ENCODE measurements at regions of chr14 and their contacts with region 1.

Region 1: GRCh38 chr14:49767562-49768300 is at the start of gene KLHDC2:
- DNase-seq: peak; percentile 93
- ATAC-seq: peak; percentile 86
- H3K4me3 ChIP-seq: peak within 1 kb of the TSS; percentile 74 to 97 (median 76)
- H3K4me3 Mint-ChIP-seq: peak within 1 kb of the TSS; percentile 98
- H3K27ac ChIP-seq: peak within 1 kb of the TSS; percentile 91 to 97
- H3K27ac Mint-ChIP-seq: peak within 1 kb of the TSS; percentile 99
- H3K4me1 ChIP-seq: peaks cover 22 to 29% of the 10 kb centered on the region in 2 donors
- H3K4me1 Mint-ChIP-seq: peaks cover 31% of the 10 kb centered on the region
- H3K27me3 ChIP-seq: no peaks in the 10 kb centered on the region
- H3K27me3 Mint-ChIP-seq: no peaks in the 10 kb centered on the region
- CTCF ChIP-seq: peak; percentile 40
- total RNA-seq, gene KLHDC2: 60.5 and 65.3 TPM in 2 replicates

Region 2: DNA sequence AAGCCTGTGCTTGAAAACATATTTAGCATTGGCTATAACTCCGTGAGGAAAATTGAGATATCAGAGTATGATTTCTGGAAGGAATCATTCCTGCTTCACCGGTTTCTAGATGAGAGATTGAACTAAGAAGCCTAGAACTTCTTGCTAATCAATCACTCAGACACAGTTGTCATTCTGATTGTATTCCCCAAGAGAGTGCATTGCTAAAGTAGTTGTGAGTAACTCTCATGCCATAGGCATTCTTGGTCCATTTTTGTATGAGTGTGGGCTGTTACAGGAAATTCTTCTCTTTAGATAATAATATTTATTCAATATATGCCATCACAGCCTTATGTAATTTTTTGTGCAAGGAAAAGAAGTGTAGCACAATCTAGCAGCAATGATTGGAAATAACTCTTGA is 1199.0 kb before region 1 on chr14:
- CTCF ChIA-PET with region 1: no interaction called
- POLR2A ChIA-PET with region 1: no interaction called
- intact Hi-C with region 1: no loop called
- DNase-seq: no peak
- ATAC-seq: no peak
- H3K4me3 ChIP-seq: no peak overlapping the region
- H3K4me3 Mint-ChIP-seq: no peak overlapping the region
- H3K27ac ChIP-seq: no peak overlapping the region
- H3K27ac Mint-ChIP-seq: no peak overlapping the region
- H3K4me1 ChIP-seq: no peaks in the 10 kb centered on the region
- H3K4me1 Mint-ChIP-seq: no peaks in the 10 kb centered on the region
- H3K27me3 ChIP-seq: no peaks in the 10 kb centered on the region
- H3K27me3 Mint-ChIP-seq: no peaks in the 10 kb centered on the region
- CTCF ChIP-seq: no peak

Region 3: DNA sequence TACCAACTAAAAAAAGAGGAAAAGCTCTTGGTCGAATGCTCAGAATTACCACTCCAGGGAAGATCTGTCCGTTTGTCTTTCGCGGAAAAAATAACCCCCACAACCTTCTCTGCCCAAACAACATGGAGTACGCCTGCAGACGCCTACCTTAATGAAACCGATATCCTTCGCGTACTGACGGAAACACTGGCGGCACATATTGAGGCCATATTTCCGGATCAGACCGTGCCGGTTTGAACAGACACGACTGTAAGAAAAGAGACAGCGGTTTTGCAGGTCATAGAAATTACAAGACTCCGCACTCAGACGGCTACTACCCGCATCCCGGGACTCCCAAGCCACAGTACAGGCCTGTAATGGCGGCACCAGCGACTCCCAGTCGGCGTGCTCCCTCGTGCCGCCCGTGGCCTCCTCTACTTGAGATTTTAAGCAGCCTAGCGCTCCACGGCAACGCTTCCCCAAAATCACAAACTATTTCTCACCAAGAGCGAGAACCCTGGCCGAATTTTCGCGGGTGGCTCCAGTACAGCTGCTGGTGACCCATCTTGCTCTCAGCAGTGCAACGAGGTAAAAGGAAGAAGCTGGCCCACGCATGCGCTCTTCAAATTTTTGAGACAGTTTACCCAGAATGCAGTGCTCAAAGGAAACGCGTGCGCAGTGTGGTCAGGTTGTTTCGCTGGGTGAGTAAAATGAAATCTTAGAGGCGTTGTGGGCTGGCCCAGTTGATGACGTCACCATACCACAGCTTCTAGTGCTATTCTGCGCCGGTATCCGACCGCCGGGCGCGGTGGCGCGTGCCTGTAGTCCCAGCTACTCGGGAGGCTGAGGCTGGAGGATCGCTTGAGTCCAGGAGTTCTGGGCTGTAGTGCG is 181.7 kb before region 1 on chr14 and contains the start of gene RPS29:
- CTCF ChIA-PET with region 1: interaction called, 3 read pairs
- POLR2A ChIA-PET with region 1: interaction called, 6 read pairs
- intact Hi-C with region 1: loop called (anchors 2 kb)
- DNase-seq: peak; percentile 100
- ATAC-seq: peak; percentile 86
- H3K4me3 ChIP-seq: peak within 1 kb of the TSS; percentile 70 to 100 (median 88)
- H3K4me3 Mint-ChIP-seq: peak within 1 kb of the TSS; percentile 88
- H3K27ac ChIP-seq: peak within 1 kb of the TSS; percentile 88 to 95
- H3K27ac Mint-ChIP-seq: peak within 1 kb of the TSS; percentile 100
- H3K4me1 ChIP-seq: peaks cover 17 to 24% of the 10 kb centered on the region in 2 donors
- H3K4me1 Mint-ChIP-seq: peaks cover 46% of the 10 kb centered on the region
- H3K27me3 ChIP-seq: no peaks in the 10 kb centered on the region
- H3K27me3 Mint-ChIP-seq: no peaks in the 10 kb centered on the region
- CTCF ChIP-seq: no peak
- total RNA-seq, gene RPS29: 2,497 and 2,873 TPM in 2 replicates

Region 4: GRCh38 chr14:49620182-49621113 is 147.3 kb before region 1 on chr14 and contains the starts of genes MGAT2 and RPL36AL:
- CTCF ChIA-PET with region 1: interaction called, 18 read pairs
- POLR2A ChIA-PET with region 1: interaction called, 14 read pairs
- intact Hi-C with region 1: loop called (anchors 1 kb)
- DNase-seq: peak; percentile 98
- ATAC-seq: peak; percentile 93
- H3K4me3 ChIP-seq: peak within 1 kb of the TSS; percentile 90 to 99 (median 97)
- H3K4me3 Mint-ChIP-seq: peak within 1 kb of the TSS; percentile 99
- H3K27ac ChIP-seq: peak within 1 kb of the TSS; percentile 96 to 98
- H3K27ac Mint-ChIP-seq: peak within 1 kb of the TSS; percentile 99
- H3K4me1 ChIP-seq: peaks cover 31 to 44% of the 10 kb centered on the region in 2 donors
- H3K4me1 Mint-ChIP-seq: peaks cover 55% of the 10 kb centered on the region
- H3K27me3 ChIP-seq: no peaks in the 10 kb centered on the region
- H3K27me3 Mint-ChIP-seq: no peaks in the 10 kb centered on the region
- CTCF ChIP-seq: peak; percentile 43
- total RNA-seq, gene MGAT2: 36.2 and 39.9 TPM in 2 replicates
- total RNA-seq, gene RPL36AL: 151 and 171 TPM in 2 replicates

Region 5: DNA sequence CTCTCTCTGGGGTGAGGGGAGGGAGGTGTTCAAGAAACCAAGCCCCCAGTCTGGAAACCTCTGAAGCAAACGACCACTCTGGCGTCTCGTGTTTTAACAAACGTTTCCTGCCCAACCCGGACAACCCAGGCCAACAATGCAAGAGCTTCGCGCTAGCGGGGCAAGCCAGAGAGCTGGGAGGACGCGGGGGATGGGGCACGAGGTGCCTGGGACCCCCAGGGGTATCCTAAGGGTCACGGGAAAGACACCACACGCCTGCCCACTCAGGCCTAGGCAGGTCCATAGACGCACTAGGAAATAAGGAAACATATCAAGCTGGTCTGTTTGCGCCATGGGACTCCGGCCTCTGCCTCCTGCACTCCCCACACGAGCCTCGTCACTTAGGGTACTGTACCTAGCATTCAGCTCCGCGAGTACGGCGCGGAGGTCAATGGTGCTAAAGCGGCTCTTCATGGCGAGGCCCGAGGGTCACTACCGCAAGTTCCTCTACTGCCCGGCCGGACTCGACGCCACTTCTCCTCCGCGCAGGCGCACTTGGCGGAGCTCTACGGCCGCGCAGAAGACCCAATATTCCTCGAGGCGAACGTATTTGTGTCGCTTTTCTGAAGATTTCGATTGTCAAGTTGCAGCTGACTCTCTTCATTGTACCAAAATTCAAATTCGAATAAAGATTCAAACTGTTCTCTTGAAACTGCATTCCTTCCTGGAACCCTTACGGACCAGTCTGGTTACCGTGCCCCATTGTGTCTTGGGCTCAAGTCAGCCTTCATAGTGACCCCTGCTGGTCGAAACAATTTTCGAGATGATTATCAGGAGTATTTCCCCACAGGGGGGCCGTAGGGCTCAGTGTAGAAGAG is 84.8 kb after region 1 on chr14 and contains the start of gene NEMF:
- CTCF ChIA-PET with region 1: interaction called, 4 read pairs
- POLR2A ChIA-PET with region 1: interaction called, 6 read pairs
- intact Hi-C with region 1: loop called (anchors 5 kb)
- DNase-seq: peak; percentile 94
- ATAC-seq: peak; percentile 84
- H3K4me3 ChIP-seq: peak within 1 kb of the TSS; percentile 78 to 99 (median 99)
- H3K4me3 Mint-ChIP-seq: peak within 1 kb of the TSS; percentile 98
- H3K27ac ChIP-seq: peak within 1 kb of the TSS; percentile 72 to 88
- H3K27ac Mint-ChIP-seq: peak within 1 kb of the TSS; percentile 98
- H3K4me1 ChIP-seq: peaks cover 20 to 31% of the 10 kb centered on the region in 2 donors
- H3K4me1 Mint-ChIP-seq: peaks cover 44% of the 10 kb centered on the region
- H3K27me3 ChIP-seq: no peaks in the 10 kb centered on the region
- H3K27me3 Mint-ChIP-seq: no peaks in the 10 kb centered on the region
- CTCF ChIP-seq: peak; percentile 86
- total RNA-seq, gene NEMF: 127 and 146 TPM in 2 replicates